CD4-positive, alpha-beta T cell (primary cell): ENCODE measurements at regions of chr5 and their contacts with region 1.

Region 1: GRCh38 chr5:80191991-80192398 is 63.9 kb downstream of the SERINC5 start:
- DNase-seq: peak; percentile 28 to 72 (median 46)
- ATAC-seq: peak; percentile 60
- H3K4me3 ChIP-seq: peak overlapping the region; percentile 31
- H3K4me3 Mint-ChIP-seq: peak overlapping the region; percentile 61
- H3K27ac ChIP-seq: peak overlapping the region; percentile 74 to 86
- H3K27ac Mint-ChIP-seq: peak overlapping the region; percentile 94
- H3K4me1 ChIP-seq: peaks cover 93% of the 10 kb centered on the region
- H3K4me1 Mint-ChIP-seq: peaks cover 89% of the 10 kb centered on the region
- H3K27me3 ChIP-seq: no peaks in the 10 kb centered on the region
- H3K27me3 Mint-ChIP-seq: no peaks in the 10 kb centered on the region
- CTCF ChIP-seq: no peak

Region 2: DNA sequence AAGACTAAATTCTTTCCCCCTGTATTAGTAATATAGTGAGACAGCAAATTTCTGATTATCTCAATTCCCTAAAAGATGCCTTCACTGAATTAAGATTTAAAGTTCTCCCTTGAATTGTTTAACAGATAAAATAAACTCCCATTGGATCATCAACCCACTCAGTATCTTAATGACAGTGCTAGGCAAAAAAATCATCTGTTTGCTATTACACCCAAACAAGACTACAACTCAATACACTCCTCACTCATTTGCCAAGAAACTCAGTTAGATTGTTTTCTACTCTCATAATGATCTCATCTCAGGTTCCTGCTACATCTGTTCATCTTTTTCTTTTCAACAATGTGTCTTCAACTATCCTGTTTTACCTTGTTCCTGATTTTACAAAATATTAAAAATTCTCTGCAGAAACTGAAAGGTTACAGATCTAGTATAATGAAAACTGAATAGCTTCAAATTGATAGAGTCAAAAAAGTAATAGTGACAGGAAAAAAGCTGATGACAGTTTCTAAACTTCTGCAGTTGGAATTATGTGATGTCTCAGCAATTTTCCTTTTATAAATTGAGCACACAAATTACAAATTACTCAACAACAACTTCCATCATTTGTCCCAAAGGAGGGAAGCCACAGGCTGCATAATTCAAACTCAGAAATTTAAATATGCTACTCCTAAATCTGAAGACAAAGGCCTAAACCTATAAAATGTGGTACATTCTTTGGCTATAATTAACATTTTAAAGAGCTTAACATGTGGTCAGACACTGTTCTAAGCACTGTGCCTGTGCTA is 717.4 kb before region 1 on chr5:
- CTCF ChIA-PET with region 1: no interaction called
- POLR2A ChIA-PET with region 1: no interaction called
- intact Hi-C with region 1: no loop called
- DNase-seq: no peak
- ATAC-seq: no peak
- H3K4me3 ChIP-seq: no peak overlapping the region
- H3K4me3 Mint-ChIP-seq: no peak overlapping the region
- H3K27ac ChIP-seq: no peak overlapping the region
- H3K27ac Mint-ChIP-seq: no peak overlapping the region
- H3K4me1 ChIP-seq: no peaks in the 10 kb centered on the region
- H3K4me1 Mint-ChIP-seq: no peaks in the 10 kb centered on the region
- H3K27me3 ChIP-seq: no peaks in the 10 kb centered on the region
- H3K27me3 Mint-ChIP-seq: no peaks in the 10 kb centered on the region
- CTCF ChIP-seq: no peak

Region 3: GRCh38 chr5:80153586-80154126 is 38.3 kb before region 1 on chr5:
- CTCF ChIA-PET with region 1: no interaction called
- POLR2A ChIA-PET with region 1: interaction called, 8 read pairs
- intact Hi-C with region 1: loop called in 1 of 2 experiments (anchors 2 kb)
- DNase-seq: peak in 11 of 14 experiments; percentile 19 to 67 (median 48)
- ATAC-seq: peak; percentile 69
- H3K4me3 ChIP-seq: no peak overlapping the region
- H3K4me3 Mint-ChIP-seq: peak overlapping the region; percentile 73
- H3K27ac ChIP-seq: peak overlapping the region; percentile 48 to 56
- H3K27ac Mint-ChIP-seq: peak overlapping the region; percentile 98
- H3K4me1 ChIP-seq: peaks cover 51% of the 10 kb centered on the region
- H3K4me1 Mint-ChIP-seq: peaks cover 86% of the 10 kb centered on the region
- H3K27me3 ChIP-seq: no peaks in the 10 kb centered on the region
- H3K27me3 Mint-ChIP-seq: no peaks in the 10 kb centered on the region
- CTCF ChIP-seq: no peak

Region 4: GRCh38 chr5:80172067-80172695 is 19.8 kb before region 1 on chr5:
- CTCF ChIA-PET with region 1: interaction called, 4 read pairs
- POLR2A ChIA-PET with region 1: interaction called, 12 read pairs
- intact Hi-C with region 1: no loop called
- DNase-seq: no peak
- ATAC-seq: no peak
- H3K4me3 ChIP-seq: no peak overlapping the region
- H3K4me3 Mint-ChIP-seq: no peak overlapping the region
- H3K27ac ChIP-seq: no peak overlapping the region
- H3K27ac Mint-ChIP-seq: peak overlapping the region; percentile 78
- H3K4me1 ChIP-seq: peaks cover 14% of the 10 kb centered on the region
- H3K4me1 Mint-ChIP-seq: peaks cover 48% of the 10 kb centered on the region
- H3K27me3 ChIP-seq: no peaks in the 10 kb centered on the region
- H3K27me3 Mint-ChIP-seq: no peaks in the 10 kb centered on the region
- CTCF ChIP-seq: no peak

Region 5: GRCh38 chr5:80181618-80182211 is 10.3 kb before region 1 on chr5:
- CTCF ChIA-PET with region 1: interaction called, 8 read pairs
- POLR2A ChIA-PET with region 1: interaction called, 100 read pairs
- intact Hi-C with region 1: loop called in 1 of 2 experiments (anchors 1 kb)
- DNase-seq: peak in 12 of 14 experiments; percentile 29 to 90 (median 53)
- ATAC-seq: peak; percentile 51
- H3K4me3 ChIP-seq: no peak overlapping the region
- H3K4me3 Mint-ChIP-seq: peak overlapping the region; percentile 71
- H3K27ac ChIP-seq: peak overlapping the region; percentile 63 to 77
- H3K27ac Mint-ChIP-seq: peak overlapping the region; percentile 94
- H3K4me1 ChIP-seq: peaks cover 82% of the 10 kb centered on the region
- H3K4me1 Mint-ChIP-seq: peaks cover 89% of the 10 kb centered on the region
- H3K27me3 ChIP-seq: no peaks in the 10 kb centered on the region
- H3K27me3 Mint-ChIP-seq: no peaks in the 10 kb centered on the region
- CTCF ChIP-seq: no peak

Region 6: GRCh38 chr5:80204808-80205614 is 13.0 kb after region 1 on chr5:
- CTCF ChIA-PET with region 1: interaction called, 15 read pairs
- POLR2A ChIA-PET with region 1: interaction called, 82 read pairs
- intact Hi-C with region 1: loop called in 1 of 2 experiments (anchors 2 kb)
- DNase-seq: peak in 2 of 14 experiments; percentile 51 to 63
- ATAC-seq: peak; percentile 87
- H3K4me3 ChIP-seq: no peak overlapping the region
- H3K4me3 Mint-ChIP-seq: peak overlapping the region; percentile 65
- H3K27ac ChIP-seq: peak overlapping the region; percentile 47 to 61
- H3K27ac Mint-ChIP-seq: peak overlapping the region; percentile 80
- H3K4me1 ChIP-seq: peaks cover 64% of the 10 kb centered on the region
- H3K4me1 Mint-ChIP-seq: peaks cover 92% of the 10 kb centered on the region
- H3K27me3 ChIP-seq: no peaks in the 10 kb centered on the region
- H3K27me3 Mint-ChIP-seq: no peaks in the 10 kb centered on the region
- CTCF ChIP-seq: no peak

Region 7: DNA sequence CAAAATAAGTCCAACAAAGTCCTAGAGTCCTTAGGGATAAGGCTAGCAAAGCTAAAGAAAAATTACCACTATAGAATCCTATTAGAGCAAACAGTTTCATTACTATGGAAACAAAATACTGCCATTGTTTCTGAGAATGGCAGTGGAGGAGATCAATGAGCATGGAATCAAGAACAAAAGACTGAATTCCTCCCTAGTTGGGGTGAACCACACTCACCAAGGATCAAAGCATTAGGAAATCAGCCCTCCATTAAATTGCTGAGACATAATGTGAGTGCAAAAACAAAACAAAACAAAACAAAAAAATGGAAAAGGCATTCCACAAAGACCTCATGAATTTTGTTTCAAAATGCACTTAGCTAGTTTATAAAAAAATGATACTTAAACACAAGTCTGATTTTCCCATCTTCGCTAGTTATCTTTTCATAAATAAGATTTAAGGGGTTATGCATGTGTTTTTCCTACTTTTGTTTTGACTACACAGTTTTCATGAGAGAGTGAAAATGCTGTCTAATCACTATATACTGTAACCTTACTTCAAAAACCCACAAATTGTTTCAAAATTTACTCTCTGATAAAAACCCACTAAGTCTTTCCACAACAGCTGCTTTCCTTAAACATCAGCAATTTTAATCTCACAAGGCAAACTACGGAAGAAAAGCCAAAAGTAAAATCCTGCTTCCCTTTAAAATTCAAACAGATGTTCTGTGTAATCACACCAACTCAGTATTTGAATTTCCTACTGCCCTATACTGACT is 54.2 kb after region 1 on chr5:
- CTCF ChIA-PET with region 1: no interaction called
- POLR2A ChIA-PET with region 1: interaction called, 120 read pairs
- intact Hi-C with region 1: loop called (anchors 5 kb)
- DNase-seq: peak in 1 of 14 experiments; percentile 36
- ATAC-seq: no peak
- H3K4me3 ChIP-seq: no peak overlapping the region
- H3K4me3 Mint-ChIP-seq: peak overlapping the region; percentile 26
- H3K27ac ChIP-seq: peak overlapping the region in 1 of 2 donors; percentile 49
- H3K27ac Mint-ChIP-seq: peak overlapping the region; percentile 81
- H3K4me1 ChIP-seq: peaks cover 60% of the 10 kb centered on the region
- H3K4me1 Mint-ChIP-seq: peaks cover 71% of the 10 kb centered on the region
- H3K27me3 ChIP-seq: no peaks in the 10 kb centered on the region
- H3K27me3 Mint-ChIP-seq: no peaks in the 10 kb centered on the region
- CTCF ChIP-seq: no peak